Ovary (tissue), 10 donors: ENCODE measurements at regions of chr1 and their contacts with region 1.

Region 1: DNA sequence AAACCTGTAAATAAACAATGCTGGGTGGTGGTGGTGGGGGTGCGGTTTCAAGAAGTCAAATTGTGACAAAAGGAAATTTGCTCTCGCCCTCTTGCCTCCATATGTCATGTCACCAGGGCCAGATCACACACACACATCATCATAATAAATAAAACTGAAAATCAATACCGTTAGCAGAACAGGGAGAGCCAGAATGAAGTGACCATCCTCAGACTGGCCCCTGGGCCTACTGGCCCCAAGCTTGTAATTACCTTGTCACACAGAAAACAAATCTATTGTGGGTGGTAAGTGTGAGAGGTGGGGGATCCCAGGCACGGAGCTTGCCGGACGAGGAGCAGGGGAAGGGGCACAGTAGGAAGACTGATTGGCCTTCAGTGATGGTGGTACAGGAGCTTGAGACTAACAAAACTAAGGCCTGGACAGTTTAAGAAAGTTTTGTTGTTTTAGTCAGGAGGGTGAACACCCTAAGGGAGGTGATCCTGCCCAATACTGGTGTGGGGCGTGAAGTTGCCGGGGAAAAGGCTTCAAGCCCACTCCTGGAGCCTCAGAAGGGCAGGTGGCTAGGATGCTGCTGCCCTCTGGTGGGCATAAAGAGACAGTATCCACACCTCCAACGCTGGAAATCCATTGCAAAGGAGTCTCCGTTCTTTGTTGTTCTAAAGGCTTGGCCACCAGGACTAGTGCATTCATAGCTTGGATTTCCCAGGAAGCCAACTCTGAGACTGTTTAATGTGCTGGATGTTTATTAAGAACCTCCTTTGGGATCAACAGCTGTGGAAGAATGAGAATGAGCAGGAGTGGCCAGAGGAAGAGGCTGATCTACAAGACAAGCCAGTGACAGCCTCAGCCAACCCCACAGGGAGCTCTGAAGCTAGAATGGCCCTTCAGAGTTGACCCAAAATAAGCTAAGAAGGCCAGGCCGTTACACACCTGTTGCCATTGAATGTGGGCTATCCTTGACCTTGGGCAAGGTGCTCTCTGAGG is 8.1 kb upstream of the C1orf216 start:
- DNase-seq: peak; percentile 40 to 63 (median 56)
- H3K4me3 ChIP-seq: no peak overlapping the region
- H3K27ac ChIP-seq: no peak overlapping the region
- H3K4me1 ChIP-seq: no peaks in the 10 kb centered on the region
- H3K27me3 ChIP-seq: no peaks in the 10 kb centered on the region
- CTCF ChIP-seq: peak; percentile 55 to 58 (median 58)
- EP300 ChIP-seq: no peak
- POLR2A ChIP-seq: no peak

Region 2: GRCh38 chr1:35564037-35564883 is 162.5 kb before region 1 on chr1:
- intact Hi-C with region 1: loop called in 3 of 4 experiments (anchors 2 to 5 kb)
- DNase-seq: peak; percentile 72 to 85 (median 82)
- H3K4me3 ChIP-seq: no peak overlapping the region
- H3K27ac ChIP-seq: no peak overlapping the region
- H3K4me1 ChIP-seq: peaks cover 4% of the 10 kb centered on the region
- H3K27me3 ChIP-seq: no peaks in the 10 kb centered on the region
- CTCF ChIP-seq: peak; percentile 30 to 63 (median 58)
- EP300 ChIP-seq: no peak
- POLR2A ChIP-seq: no peak

Region 3: DNA sequence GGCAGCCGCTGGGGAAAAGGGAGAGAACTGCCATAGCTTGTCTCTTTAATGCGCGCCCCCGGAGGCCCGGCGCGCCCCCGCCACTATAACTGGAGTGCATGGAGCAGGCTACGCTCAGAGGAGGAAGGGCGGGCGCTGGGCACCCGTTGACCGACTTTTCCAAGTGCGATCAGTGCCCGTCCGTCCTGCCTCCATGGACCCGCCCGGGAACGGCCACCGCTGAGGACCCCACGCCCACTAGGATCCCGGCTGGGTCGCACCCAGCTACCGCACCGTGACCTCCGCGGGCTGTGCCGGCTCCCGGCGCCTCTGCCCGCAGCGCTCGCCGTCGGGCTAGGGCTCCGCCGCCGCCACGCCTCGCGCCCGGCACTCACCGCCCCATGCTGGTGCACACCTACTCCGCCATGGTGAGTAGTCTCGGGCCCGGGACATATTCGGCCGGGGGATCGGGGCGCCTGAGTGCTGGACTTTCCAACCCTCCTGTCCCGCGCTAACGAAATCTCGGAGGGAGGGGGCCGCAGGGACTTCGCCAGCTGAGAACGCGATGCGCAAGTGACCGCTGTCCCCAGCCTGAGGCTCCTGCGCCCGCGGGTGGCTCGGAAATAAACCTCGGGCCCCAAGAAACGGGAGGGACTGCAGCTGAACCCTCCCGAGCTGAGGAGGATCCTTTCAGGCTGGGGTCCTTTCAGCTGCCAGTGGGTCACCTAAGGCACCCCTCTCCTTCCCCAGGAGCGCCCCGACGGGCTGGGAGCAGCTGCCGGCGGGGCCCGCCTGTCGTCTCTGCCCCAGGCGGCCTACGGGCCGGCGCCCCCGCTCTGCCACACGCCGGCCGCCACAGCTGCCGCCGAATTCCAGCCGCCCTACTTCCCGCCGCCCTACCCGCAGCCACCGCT is 153.3 kb before region 1 on chr1 and contains the start of gene TFAP2E:
- intact Hi-C with region 1: loop called (anchors 2 to 5 kb)
- DNase-seq: no peak
- H3K4me3 ChIP-seq: no peak within 1 kb of the TSS
- H3K27ac ChIP-seq: no peak within 1 kb of the TSS
- H3K4me1 ChIP-seq: peaks cover 7% of the 10 kb centered on the region
- H3K27me3 ChIP-seq: no peaks in the 10 kb centered on the region
- CTCF ChIP-seq: no peak
- EP300 ChIP-seq: no peak
- POLR2A ChIP-seq: no peak
- total RNA-seq, gene TFAP2E: 0.24 to 1.6 (median 1.3) TPM